Sciatic nerve (tissue), 2 donors: ENCODE measurements at regions of chr5 and their contacts with region 1.

Region 1: DNA sequence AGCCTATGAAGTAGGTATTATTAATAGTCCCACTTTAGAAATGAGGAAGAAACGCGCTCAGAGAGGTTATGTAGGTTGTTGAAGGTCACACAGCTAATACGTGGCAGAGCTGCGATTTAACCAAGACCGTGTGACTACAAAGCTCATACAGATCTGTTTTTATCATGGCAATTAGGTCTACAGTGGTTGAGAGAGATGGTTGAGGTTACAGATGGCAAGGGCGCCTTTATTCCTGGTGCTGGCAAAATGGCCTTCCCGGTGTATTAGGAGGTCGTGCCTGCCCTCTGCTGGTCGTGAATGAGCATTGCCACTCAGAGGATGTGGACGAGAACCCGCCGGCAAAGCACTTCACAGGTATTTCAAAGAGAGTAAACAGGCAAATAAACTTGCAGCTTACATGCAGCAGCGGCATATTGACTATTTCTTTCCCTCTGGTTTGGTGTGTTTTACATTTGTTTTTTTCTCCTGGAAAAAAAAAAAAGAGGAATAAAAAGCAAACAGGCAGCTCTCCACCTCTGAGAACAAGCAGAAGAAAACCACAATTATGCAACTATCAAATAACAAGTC is 65.3 kb upstream of the EGFLAM start:
- DNase-seq: peak; percentile 79
- ATAC-seq: peak; percentile 65

Region 2: GRCh38 chr5:37412515-37413277 is 780.4 kb before region 1 on chr5:
- intact Hi-C with region 1: loop called (anchors 2 kb)
- DNase-seq: no peak
- ATAC-seq: peak; percentile 73

Region 3: GRCh38 chr5:37837414-37838032 is 355.6 kb before region 1 on chr5:
- intact Hi-C with region 1: loop called (anchors 10 kb)
- DNase-seq: peak; percentile 83
- ATAC-seq: peak; percentile 79

Region 4: GRCh38 chr5:38148021-38148625 is 45.0 kb before region 1 on chr5:
- intact Hi-C with region 1: no loop called
- DNase-seq: no peak
- ATAC-seq: no peak

Region 5: DNA sequence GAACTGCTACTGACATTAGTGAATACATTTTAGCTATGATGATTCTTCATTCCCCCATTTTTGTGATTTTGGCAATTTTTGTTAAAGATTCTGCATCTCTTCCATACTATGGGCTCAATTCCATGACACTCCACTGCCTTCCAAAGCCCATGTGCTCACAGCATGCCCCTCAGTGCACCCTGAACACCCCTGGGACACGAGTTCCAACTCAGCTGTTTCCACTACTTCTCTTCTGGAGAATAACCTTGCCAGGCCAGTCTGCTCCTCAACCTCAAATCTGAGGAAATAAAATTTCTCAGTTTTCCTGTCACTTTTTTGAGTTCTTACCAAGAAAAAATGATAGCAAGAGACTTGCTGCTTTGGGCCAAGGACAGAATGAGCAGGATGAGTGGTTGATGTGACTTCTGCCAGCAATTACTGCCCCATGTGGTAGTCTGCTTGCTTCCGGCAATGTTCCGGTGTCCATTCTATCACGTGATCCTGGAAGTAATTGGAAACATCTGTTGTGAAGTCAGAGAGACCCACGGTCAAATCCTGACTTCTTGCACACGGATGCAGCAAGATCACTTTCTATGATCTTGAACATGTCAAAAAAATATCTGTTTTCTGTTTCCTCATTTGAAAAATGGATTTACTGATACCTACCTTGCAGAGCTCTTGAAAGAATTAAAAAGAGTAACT is 123.6 kb after region 1 on chr5:
- intact Hi-C with region 1: no loop called
- DNase-seq: no peak
- ATAC-seq: peak; percentile 95